ENCODE measurements at regions of chr18 and their contacts with region 1.

Region 1: GRCh38 chr18:23356915-23357601 is 96.0 kb upstream of the RIOK3 start:
- DNase-seq: no peak
- ATAC-seq: peak; percentile 40 to 52
- H3K4me3 ChIP-seq: no peak overlapping the region
- H3K27ac ChIP-seq: peak overlapping the region; percentile 86
- H3K4me1 ChIP-seq: peaks cover 11% of the 10 kb centered on the region
- H3K27me3 ChIP-seq: no peaks in the 10 kb centered on the region

Region 2: DNA sequence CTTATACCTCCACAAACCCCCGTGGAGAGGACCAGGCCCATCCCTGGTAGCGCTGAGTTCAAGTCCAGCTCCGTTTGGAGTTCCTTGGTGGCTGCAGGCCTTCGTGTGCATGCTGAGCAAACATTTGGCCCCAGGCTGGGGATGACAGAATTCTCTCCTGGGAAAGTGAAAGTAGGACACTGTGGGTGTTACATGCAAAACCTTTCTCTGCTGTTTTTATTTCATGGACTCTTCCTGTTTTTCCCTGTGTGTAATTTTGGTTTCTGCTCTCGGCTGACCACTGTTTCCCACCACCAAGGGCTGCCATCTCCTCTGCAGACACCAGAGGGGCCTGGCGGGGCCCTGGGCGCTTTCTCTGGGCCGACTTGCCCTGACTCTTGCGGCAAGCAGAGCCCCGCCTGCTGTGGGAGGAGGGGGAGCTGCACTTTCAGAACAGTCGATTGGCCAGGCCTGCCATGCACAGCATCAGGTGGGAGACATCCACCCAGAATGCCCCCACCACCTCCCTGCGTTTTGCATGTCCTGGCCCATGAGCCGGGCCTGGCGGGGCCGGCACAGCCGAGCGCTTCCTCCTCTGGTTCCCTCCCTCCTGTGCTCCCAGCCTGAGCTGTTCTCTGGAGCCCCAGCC is 119.4 kb before region 1 on chr18:
- intact Hi-C with region 1: loop called in 1 of 4 experiments (anchors 5 kb)
- DNase-seq: peak; percentile 69 to 87 (median 85)
- ATAC-seq: peak; percentile 81 to 85
- H3K4me3 ChIP-seq: peak overlapping the region; percentile 0
- H3K27ac ChIP-seq: peak overlapping the region; percentile 22
- H3K4me1 ChIP-seq: peaks cover 8% of the 10 kb centered on the region
- H3K27me3 ChIP-seq: no peaks in the 10 kb centered on the region

Region 3: GRCh38 chr18:23259701-23260582 is 97.1 kb before region 1 on chr18:
- intact Hi-C with region 1: loop called in 1 of 4 experiments (anchors 10 kb)
- DNase-seq: peak; percentile 85 to 94 (median 94)
- ATAC-seq: peak; percentile 87
- H3K4me3 ChIP-seq: peak overlapping the region; percentile 5
- H3K27ac ChIP-seq: peak overlapping the region; percentile 53
- H3K4me1 ChIP-seq: peaks cover 18% of the 10 kb centered on the region
- H3K27me3 ChIP-seq: no peaks in the 10 kb centered on the region

Region 4: GRCh38 chr18:23573626-23574431 is 216.8 kb after region 1 on chr18:
- intact Hi-C with region 1: no loop called
- DNase-seq: no peak
- ATAC-seq: no peak
- H3K4me3 ChIP-seq: no peak overlapping the region
- H3K27ac ChIP-seq: peak overlapping the region; percentile 17
- H3K4me1 ChIP-seq: peaks cover 2% of the 10 kb centered on the region
- H3K27me3 ChIP-seq: no peaks in the 10 kb centered on the region